ENCODE measurements at regions of chr2 and their contacts with region 1.

Region 1: GRCh38 chr2:207166039-207166348 is 246 bp upstream of the KLF7 start:
- DNase-seq: peak; percentile 99
- H3K4me3 Mint-ChIP-seq: peak overlapping the region; percentile 98
- H3K27ac Mint-ChIP-seq: peak overlapping the region; percentile 97
- H3K4me1 Mint-ChIP-seq: peaks cover 46% of the 10 kb centered on the region
- H3K27me3 Mint-ChIP-seq: no peaks in the 10 kb centered on the region

Region 2: DNA sequence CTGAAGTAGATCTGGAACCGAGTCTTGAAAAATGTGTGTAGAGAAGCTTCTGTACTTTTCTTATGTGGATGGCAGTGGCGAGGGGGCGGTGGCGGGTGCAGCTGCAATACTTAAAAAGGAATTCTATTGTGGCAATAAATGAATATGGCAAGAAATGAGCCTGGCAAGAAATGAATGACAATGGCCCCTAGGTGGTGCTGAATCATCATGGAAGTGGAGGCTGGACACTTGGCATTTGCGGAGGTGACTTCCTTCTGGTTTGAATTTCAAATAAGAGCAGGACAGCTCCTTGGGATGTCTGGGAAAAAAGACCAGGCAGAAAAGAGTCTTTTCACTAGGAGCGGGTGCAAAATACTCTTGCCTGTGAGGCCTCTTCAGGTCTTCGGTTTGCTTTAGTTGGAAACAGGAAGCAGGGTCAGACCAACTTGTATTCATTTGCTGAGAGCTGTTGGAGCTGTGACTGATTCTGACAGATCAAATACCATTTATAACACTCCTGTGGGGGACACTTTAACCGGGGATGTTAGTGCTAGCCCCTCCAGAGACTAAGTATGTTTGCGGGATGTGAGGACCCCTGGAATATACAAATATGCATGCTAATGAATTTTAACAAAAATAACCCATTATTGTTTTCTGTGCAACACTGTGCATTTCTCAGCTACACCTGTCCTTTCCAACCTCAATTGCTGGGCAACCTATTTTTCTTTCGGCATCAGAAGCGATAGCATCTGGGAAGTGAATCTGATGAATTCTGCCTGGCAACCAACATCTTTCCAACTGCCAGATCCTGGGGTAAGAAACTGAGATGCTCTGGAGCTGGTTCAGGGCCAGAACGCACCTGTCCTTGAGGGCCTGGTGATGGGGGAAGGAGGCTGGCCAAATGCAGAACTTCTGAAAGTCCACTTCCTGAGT is 365.2 kb before region 1 on chr2:
- intact Hi-C with region 1: loop called (anchors 10 kb)
- DNase-seq: peak; percentile 40
- H3K4me3 Mint-ChIP-seq: peak overlapping the region; percentile 57
- H3K27ac Mint-ChIP-seq: peak overlapping the region; percentile 13
- H3K4me1 Mint-ChIP-seq: peaks cover 18% of the 10 kb centered on the region
- H3K27me3 Mint-ChIP-seq: no peaks in the 10 kb centered on the region

Region 3: GRCh38 chr2:207121784-207122183 is 44.2 kb before region 1 on chr2:
- intact Hi-C with region 1: loop called (anchors 1 kb)
- DNase-seq: no peak
- H3K4me3 Mint-ChIP-seq: no peak overlapping the region
- H3K27ac Mint-ChIP-seq: no peak overlapping the region
- H3K4me1 Mint-ChIP-seq: peaks cover 46% of the 10 kb centered on the region
- H3K27me3 Mint-ChIP-seq: no peaks in the 10 kb centered on the region

Region 4: DNA sequence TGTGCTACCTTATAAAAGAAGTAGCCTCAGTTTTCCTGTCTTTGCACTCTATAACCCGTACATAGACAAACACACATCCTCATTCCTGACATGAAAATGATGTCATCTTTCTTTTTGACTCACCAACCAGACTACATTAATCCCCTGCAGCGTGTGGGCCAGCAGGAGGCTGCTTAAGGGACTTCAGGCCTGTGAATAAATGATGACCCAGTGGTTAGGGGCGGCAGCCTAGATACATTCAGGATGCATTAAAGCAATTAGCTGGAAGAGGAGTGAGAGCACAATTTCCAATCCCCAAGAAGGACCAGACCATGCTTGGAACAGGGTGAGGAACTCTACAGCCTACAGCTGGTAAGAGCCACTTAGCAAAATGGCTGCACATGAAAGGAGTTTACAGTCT is 57.1 kb after region 1 on chr2:
- intact Hi-C with region 1: loop called (anchors 1 kb)
- DNase-seq: no peak
- H3K4me3 Mint-ChIP-seq: peak overlapping the region; percentile 23
- H3K27ac Mint-ChIP-seq: peak overlapping the region; percentile 57
- H3K4me1 Mint-ChIP-seq: peaks cover 45% of the 10 kb centered on the region
- H3K27me3 Mint-ChIP-seq: no peaks in the 10 kb centered on the region

Region 5: GRCh38 chr2:207233731-207234130 is 67.7 kb after region 1 on chr2:
- intact Hi-C with region 1: no loop called
- DNase-seq: no peak
- H3K4me3 Mint-ChIP-seq: no peak overlapping the region
- H3K27ac Mint-ChIP-seq: no peak overlapping the region
- H3K4me1 Mint-ChIP-seq: peaks cover 43% of the 10 kb centered on the region
- H3K27me3 Mint-ChIP-seq: no peaks in the 10 kb centered on the region

Region 6: DNA sequence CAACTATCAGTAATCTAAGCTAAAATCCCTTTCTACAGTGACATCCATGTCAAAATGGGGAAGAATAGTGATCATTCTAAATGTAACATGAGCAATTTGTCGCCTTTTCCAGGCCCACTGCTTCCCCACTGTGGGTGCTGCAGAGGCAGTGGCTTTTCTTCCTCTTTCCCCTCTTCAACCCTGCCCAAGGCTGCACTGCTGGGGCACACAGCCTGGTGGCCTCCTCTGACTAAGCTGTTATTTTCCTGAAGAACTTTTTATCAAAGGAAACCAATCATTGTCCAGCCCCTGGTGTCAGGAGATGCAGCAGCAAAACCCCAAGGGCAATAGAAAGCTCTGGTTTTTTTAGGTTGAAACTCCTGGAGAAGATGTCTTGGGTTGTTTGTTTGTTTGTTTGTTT is 117.4 kb after region 1 on chr2:
- intact Hi-C with region 1: loop called (anchors 2 kb)
- DNase-seq: no peak
- H3K4me3 Mint-ChIP-seq: peak overlapping the region; percentile 55
- H3K27ac Mint-ChIP-seq: peak overlapping the region; percentile 82
- H3K4me1 Mint-ChIP-seq: peaks cover 67% of the 10 kb centered on the region
- H3K27me3 Mint-ChIP-seq: no peaks in the 10 kb centered on the region

Region 7: DNA sequence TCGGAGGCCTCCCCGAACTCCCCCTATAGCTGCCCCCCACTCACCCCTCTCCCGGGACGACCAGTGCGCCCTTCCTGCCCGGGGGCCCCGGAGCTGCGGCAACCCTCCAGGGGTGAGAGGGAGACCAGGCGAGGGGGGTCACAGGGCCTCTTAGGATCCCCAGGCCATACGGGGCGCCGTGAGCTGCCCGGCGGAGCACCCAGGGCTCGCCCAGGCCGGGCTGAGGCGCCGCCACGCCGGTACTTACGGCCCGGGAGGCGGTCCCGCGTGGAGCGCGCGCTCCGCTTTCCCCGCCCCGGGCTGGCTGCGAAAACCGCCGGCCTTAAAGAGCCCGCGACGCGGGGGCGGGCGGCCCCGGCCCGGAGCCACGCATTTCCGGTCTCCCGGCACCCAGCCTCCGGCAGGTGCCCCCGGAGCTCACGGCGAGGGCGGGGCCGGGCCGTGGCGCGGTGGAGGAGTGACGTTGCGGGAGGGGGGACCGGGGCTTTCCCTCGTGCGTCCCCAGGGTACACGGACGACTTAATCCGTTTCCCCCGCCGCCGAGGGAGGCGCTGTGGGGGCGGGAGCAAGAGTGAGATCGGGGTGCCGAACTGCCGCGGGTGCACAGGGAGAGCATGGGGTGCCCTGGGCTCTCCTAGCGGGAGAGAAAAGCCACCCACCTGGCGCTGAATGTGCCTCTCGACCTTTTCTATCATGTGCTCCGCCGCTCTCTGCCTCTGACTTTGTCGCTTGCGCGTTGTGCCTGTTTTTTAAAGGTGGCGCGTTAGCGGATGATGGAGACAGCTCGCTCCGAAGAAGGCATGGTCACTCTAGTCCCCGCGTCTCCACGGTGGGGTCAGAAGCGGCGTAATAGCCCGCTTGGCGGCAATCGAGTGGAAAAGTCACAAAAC is 459.3 kb after region 1 on chr2 and contains the start of gene METTL21A:
- intact Hi-C with region 1: loop called (anchors 10 kb)
- DNase-seq: peak; percentile 93
- H3K4me3 Mint-ChIP-seq: peak within 1 kb of the TSS; percentile 92
- H3K27ac Mint-ChIP-seq: peak within 1 kb of the TSS; percentile 98
- H3K4me1 Mint-ChIP-seq: peaks cover 37% of the 10 kb centered on the region
- H3K27me3 Mint-ChIP-seq: no peaks in the 10 kb centered on the region
- total RNA-seq, gene METTL21A: 32.1 and 35.1 TPM in 2 replicates

Measured in activated T-helper 2 cell treated with anti-CD3 and anti-CD28 coated beads, Interferon-gamma antibody, Interleukin-2, Interleukin-4, amounts not matched to agents 10 μg/mL and 5 μg/mL and 100 μg/mL, durations not matched to agents 14 hours and 24 hours and 36 hours (primary cell).